ENCODE measurements at regions of chr1 and their contacts with region 1.

Region 1: DNA sequence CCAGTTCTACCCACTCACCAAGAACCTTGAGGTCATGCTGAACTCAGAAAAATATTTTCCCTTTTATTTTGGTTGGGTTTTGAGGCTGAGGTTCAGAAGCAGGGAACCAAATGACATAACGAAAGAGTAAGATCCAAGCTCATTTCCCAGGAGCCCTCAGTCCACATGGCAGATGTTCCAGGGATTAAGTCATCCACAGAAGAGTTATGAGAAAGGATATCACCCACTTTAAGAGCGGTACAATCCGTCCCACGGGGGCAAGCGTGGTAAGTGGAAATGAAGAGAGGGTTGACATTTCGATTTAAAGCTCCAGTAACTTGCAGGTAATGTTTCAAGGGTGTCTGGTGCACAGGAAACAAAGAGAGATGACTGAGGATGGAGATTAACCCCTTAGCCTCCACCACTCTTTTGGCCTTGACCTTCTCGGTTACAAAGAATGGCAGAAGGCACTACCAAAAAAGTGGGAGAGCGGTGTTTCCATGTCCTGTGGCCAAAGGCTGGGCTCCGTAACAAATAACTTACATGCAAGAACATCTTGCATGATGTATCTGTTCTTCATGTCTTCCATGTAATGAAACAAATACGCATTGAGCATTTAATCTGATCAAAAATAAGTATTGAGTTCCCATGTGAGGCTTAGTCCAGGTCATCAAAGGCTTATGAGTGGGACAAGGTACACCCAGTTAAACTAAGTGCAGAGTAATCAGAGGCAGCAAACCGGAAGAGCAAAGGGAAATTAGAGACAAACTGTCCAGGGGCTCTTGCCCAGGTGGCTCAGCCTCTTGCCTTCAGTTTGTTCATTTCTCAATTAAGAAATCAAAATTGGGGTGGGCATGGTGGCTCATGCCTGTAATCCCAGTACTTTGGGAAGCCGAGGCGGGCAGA is 241.4 kb downstream of the TOMM20 start:
- DNase-seq: peak; percentile 74
- ATAC-seq: peak; percentile 72 to 77

Region 2: GRCh38 chr1:234997201-234997895 is 110.1 kb after region 1 on chr1:
- intact Hi-C with region 1: loop called in 1 of 2 experiments (anchors 5 kb)
- DNase-seq: peak; percentile 99
- ATAC-seq: peak; percentile 95 to 96